CD4-positive, alpha-beta memory T cell (primary cell): ENCODE measurements at regions of chr2 and their contacts with region 1.

Region 1: DNA sequence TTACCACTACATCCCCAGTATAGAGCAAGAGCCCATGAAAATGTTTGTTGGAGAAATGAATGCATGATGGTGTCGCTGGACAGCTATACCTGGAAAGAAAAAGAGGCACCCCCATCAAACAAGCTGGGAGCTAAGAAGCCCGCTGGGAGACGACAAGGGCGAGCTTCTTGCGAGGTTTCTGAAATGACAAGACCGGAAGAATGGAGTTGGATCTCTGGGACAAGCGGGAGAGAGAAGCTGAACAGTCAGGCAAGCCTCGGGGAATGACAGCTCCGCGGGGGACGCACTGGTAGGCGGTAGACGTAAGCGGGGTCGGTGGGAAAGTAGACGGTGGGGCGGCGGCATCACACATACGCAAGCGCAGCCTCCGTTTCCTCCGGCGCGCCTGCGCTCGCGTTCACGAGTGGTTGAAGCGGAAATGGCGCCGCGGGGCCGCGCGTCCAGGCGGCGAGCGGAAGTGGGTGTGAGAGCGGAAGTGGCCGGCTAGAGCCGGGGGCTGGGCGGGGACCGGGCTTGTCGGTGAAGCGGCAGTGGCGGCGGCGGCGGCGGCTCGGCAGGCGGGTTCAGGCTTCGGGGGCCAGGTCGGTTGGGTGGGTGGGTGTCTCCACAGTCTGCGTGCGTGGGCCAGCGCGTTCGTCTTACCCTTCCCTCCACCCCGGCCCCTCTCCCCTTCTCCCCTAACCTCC is at the start of gene ARPC2:
- DNase-seq: peak; percentile 92 to 97 (median 96)
- H3K4me3 ChIP-seq: peak within 1 kb of the TSS; percentile 85 to 97
- H3K4me3 Mint-ChIP-seq: peak within 1 kb of the TSS; percentile 89 to 98 (median 96)
- H3K27ac ChIP-seq: peak within 1 kb of the TSS; percentile 93
- H3K27ac Mint-ChIP-seq: peak within 1 kb of the TSS; percentile 93 to 99 (median 97)
- H3K4me1 ChIP-seq: peaks cover 39% of the 10 kb centered on the region
- H3K4me1 Mint-ChIP-seq: peaks cover 28 to 52% (median 38%) of the 10 kb centered on the region in 4 donors
- H3K27me3 ChIP-seq: no peaks in the 10 kb centered on the region
- H3K27me3 Mint-ChIP-seq: no peaks in the 10 kb centered on the region
- total RNA-seq, gene ARPC2: 412 to 414 TPM

Region 2: GRCh38 chr2:218161644-218162043 is 55.2 kb before region 1 on chr2:
- CTCF ChIA-PET with region 1: no interaction called
- POLR2A ChIA-PET with region 1: no interaction called
- intact Hi-C with region 1: no loop called
- DNase-seq: no peak
- H3K4me3 ChIP-seq: no peak overlapping the region
- H3K4me3 Mint-ChIP-seq: no peak overlapping the region
- H3K27ac ChIP-seq: no peak overlapping the region
- H3K27ac Mint-ChIP-seq: peak overlapping the region in 1 of 7 donors; percentile 62
- H3K4me1 ChIP-seq: peaks cover 8% of the 10 kb centered on the region
- H3K4me1 Mint-ChIP-seq: peaks cover 3 to 11% (median 7%) of the 10 kb centered on the region in 4 donors
- H3K27me3 ChIP-seq: no peaks in the 10 kb centered on the region
- H3K27me3 Mint-ChIP-seq: peaks cover 1 to 2% of the 10 kb centered on the region in 2 donors

Region 3: DNA sequence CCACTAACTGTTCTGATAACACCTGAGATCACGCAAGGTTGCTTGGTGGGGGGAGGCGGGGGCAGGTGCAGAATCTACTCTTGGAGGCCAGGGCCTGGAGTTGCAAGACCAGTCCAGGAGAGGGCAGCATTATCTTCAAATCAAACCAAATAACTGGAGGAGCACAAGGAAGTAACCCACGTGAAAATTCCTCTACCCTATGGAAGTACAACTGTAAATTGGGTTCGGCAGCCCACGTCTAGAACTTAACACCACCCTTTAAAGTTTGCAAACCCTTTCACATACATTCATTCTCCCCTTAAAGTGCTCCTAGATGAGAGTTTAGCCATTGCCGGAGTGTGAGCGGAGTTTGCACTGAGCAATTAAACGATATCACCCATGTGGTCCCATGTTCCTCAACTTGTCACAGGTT is 30.5 kb before region 1 on chr2:
- CTCF ChIA-PET with region 1: interaction called, 6 read pairs
- POLR2A ChIA-PET with region 1: interaction called, 6 read pairs
- intact Hi-C with region 1: loop called (anchors 1 kb)
- DNase-seq: peak; percentile 68 to 79 (median 73)
- H3K4me3 ChIP-seq: no peak overlapping the region
- H3K4me3 Mint-ChIP-seq: peak overlapping the region in 1 of 8 donors; percentile 3
- H3K27ac ChIP-seq: no peak overlapping the region
- H3K27ac Mint-ChIP-seq: peak overlapping the region in 2 of 7 donors; percentile 24 to 44
- H3K4me1 ChIP-seq: peaks cover 8% of the 10 kb centered on the region
- H3K4me1 Mint-ChIP-seq: peaks cover 5 to 8% (median 7%) of the 10 kb centered on the region in 4 donors
- H3K27me3 ChIP-seq: no peaks in the 10 kb centered on the region
- H3K27me3 Mint-ChIP-seq: peaks cover 0 to 1% of the 10 kb centered on the region in 2 donors

Region 4: GRCh38 chr2:218485986-218486667 is 269.3 kb after region 1 on chr2:
- CTCF ChIA-PET with region 1: no interaction called
- POLR2A ChIA-PET with region 1: no interaction called
- intact Hi-C with region 1: no loop called
- DNase-seq: no peak
- H3K4me3 ChIP-seq: no peak overlapping the region
- H3K4me3 Mint-ChIP-seq: no peak overlapping the region
- H3K27ac ChIP-seq: no peak overlapping the region
- H3K27ac Mint-ChIP-seq: peak overlapping the region in 2 of 7 donors; percentile 23 to 43
- H3K4me1 ChIP-seq: peaks cover 8% of the 10 kb centered on the region
- H3K4me1 Mint-ChIP-seq: peaks cover 7 to 15% (median 11%) of the 10 kb centered on the region in 4 donors
- H3K27me3 ChIP-seq: no peaks in the 10 kb centered on the region
- H3K27me3 Mint-ChIP-seq: no peaks in the 10 kb centered on the region